Colonic mucosa (tissue), 4 donors: ENCODE measurements at regions of chrX and their contacts with region 1.

Region 1: DNA sequence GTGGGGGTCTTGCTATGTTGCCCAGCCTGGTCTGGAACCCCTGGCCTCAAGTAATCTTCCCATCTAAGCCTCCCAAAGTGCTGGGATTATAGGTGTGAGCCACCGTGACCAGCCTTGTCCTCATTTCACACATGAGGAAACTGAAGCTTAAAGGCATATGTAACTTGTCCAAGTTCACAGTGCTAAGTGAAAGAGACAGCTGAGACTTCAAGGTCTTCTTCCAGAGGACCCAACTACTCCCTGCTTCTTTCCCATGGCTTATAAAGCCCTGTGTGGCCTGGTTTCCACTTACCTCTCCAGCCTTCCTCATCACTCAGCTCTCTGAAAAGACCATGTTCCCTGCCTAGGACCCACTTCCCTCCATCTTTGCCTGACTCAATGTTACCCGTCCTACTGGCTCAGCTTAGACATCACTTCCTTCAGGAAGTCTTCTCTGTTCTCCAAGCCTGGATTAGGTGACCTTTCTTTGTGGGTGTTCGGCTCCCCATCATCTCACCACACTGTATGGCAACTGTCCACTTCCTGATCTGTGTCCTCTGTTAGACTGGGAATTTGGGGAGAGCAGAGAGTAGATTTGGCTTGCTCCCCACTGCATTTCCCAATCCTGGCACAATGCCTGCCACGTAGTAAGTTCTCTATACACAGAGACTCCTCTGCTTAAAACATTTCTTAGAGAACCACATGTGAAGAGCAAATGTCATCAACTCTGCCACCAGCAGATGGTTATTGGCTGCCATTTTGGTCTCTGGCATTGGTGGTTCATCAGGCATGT is 30.4 kb upstream of the LAMP2 start:
- DNase-seq: no peak
- H3K4me3 ChIP-seq: no peak overlapping the region
- H3K27ac ChIP-seq: no peak overlapping the region
- H3K4me1 ChIP-seq: no peaks in the 10 kb centered on the region
- H3K27me3 ChIP-seq: no peaks in the 10 kb centered on the region
- CTCF ChIP-seq: no peak

Region 2: GRCh38 chrX:120668357-120668756 is 168.9 kb after region 1 on chrX:
- intact Hi-C with region 1: loop called (anchors 5 kb)
- DNase-seq: no peak
- H3K4me3 ChIP-seq: no peak overlapping the region
- H3K27ac ChIP-seq: no peak overlapping the region
- H3K4me1 ChIP-seq: no peaks in the 10 kb centered on the region
- H3K27me3 ChIP-seq: no peaks in the 10 kb centered on the region
- CTCF ChIP-seq: no peak

Region 3: DNA sequence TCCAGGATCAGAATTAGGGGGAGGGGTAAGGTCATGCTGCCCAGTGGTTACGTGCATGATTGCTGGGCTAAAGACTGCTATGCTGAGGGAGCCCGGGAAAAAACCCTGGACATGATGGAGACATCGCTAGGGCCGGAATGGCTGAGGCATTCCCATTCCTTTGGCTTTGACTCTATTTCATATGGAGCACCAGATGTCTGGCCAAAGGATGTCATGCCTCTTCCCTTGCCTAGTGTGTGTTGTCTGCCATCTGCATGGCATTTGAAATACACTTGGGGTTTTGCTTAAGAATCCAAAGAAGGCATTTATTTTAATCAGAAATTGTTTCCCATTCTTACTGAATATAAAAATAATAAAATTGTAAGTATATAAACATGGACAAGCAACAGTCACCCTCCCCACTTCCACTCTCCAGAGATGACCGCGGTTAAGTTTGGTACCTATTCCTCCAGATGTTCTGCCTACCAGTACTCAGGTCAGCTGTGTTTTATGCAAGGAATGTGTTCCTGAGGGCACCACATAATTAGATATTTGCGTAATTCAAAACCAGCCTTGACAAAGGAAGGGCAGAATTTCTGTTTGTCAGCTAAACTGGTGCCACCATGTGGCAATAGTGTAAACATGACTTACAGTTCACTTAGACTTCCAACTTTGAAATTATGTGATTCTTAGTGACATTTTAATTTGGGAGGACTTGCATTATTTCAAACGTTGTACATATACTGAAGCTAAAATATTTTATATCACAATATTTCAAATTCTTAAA is 270.3 kb after region 1 on chrX:
- intact Hi-C with region 1: loop called (anchors 10 kb)
- DNase-seq: no peak
- H3K4me3 ChIP-seq: no peak overlapping the region
- H3K27ac ChIP-seq: no peak overlapping the region
- H3K4me1 ChIP-seq: no peaks in the 10 kb centered on the region
- H3K27me3 ChIP-seq: no peaks in the 10 kb centered on the region
- CTCF ChIP-seq: no peak